Left lung (tissue), 14 donors: ENCODE measurements at regions of chr12 and their contacts with region 1.

Region 1: GRCh38 chr12:55194382-55194781 is 26.4 kb upstream of the OR10A7 start:
- DNase-seq: no peak
- ATAC-seq: no peak
- H3K4me3 ChIP-seq: no peak overlapping the region
- H3K27ac ChIP-seq: no peak overlapping the region
- H3K4me1 ChIP-seq: no peaks in the 10 kb centered on the region
- H3K27me3 ChIP-seq: no peaks in the 10 kb centered on the region
- CTCF ChIP-seq: no peak

Region 2: DNA sequence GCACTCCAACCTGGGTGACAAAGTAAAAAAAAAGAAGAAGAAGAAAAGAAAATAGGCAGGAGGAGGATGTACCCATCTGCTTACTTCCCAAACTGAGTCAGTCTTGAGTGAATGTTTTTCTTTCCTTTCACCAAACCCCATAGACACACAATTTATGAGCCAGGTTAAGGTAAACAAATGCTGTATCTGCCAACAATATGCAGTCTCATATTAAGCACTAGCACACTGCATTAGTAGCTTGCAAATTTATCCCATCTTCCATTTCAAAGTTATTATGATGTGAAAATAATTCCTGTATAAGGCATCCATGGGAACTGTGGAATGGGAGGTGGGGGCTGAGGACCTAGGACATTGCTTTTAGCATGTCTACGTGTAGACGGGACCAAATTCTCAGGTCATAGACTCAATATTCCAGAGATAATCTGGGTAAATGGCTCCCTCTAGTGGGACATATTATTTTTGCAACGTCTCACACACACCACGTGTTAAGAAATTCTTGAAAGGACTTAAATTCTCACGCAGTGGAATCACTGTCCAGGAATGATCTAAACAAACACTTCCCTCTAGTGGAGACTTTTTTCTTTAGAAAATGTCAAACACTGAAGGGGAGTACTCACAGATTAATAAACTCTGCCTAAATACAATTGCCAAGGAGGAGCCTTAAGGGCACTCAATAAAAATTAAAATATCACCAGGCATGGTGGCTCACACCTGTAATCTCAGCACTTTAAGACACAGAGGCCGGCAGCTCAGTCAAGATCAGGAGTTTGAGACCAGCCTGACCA is 425.2 kb after region 1 on chr12:
- intact Hi-C with region 1: loop called in 1 of 2 experiments (anchors 5 kb)
- DNase-seq: peak in 2 of 4 donors; percentile 80 to 88
- ATAC-seq: peak; percentile 99
- H3K4me3 ChIP-seq: no peak overlapping the region
- H3K27ac ChIP-seq: no peak overlapping the region
- H3K4me1 ChIP-seq: peaks cover 0 to 11% of the 10 kb centered on the region in 2 donors
- H3K27me3 ChIP-seq: no peaks in the 10 kb centered on the region
- CTCF ChIP-seq: peak; percentile 78 to 80